Dorsolateral prefrontal cortex (tissue), 120 donors: ENCODE measurements at regions of chr20 and their contacts with region 1.

Region 1: DNA sequence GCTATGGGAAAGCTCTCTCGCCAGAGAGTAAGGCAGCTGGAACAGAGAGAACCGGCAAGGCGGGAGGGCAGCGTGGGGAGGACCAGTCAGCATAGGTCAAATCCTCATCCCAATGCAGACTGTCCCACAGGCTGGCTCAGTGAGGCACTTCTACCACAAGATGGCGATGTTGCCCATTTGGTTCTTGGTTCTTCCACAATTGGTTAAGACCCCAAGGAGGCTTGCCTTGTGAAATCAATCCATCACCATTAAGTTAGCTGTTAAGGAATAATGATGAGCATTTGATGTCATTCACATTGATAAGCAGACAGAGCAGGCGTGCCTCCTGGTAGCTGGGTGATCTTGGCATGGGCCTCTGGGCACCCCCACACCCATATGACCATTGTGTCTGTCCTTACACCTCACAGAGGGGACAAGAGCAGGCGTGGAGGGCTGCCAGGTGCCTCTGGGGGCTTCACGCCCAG is 2.4 kb downstream of the CSTL1 start:
- DNase-seq: peak in 8 of 10 donors; percentile 50 to 83 (median 74)
- H3K4me3 ChIP-seq: no peak overlapping the region
- H3K27ac ChIP-seq: no peak overlapping the region
- H3K27me3 ChIP-seq: no peaks in the 10 kb centered on the region
- CTCF ChIP-seq: peak; percentile 65 to 94 (median 89)

Region 2: GRCh38 chr20:23357767-23358591 is 83.9 kb before region 1 on chr20:
- intact Hi-C with region 1: loop called in 1 of 2 experiments (anchors 5 kb)
- DNase-seq: peak; percentile 99 to 100 (median 100)
- H3K4me3 ChIP-seq: peak overlapping the region; percentile 47 to 97 (median 77)
- H3K27ac ChIP-seq: peak overlapping the region; percentile 63 to 100 (median 95)
- H3K27me3 ChIP-seq: no peaks in the 10 kb centered on the region
- CTCF ChIP-seq: peak in 40 of 56 donors; percentile 3 to 58 (median 26)

Region 3: GRCh38 chr20:23606652-23607049 is 164.8 kb after region 1 on chr20:
- intact Hi-C with region 1: loop called (anchors 2 to 5 kb)
- DNase-seq: peak in 9 of 10 donors; percentile 49 to 83 (median 74)
- H3K4me3 ChIP-seq: no peak overlapping the region
- H3K27ac ChIP-seq: no peak overlapping the region
- H3K27me3 ChIP-seq: peaks cover 0 to 8% (median 0%) of the 10 kb centered on the region in 45 donors
- CTCF ChIP-seq: peak; percentile 40 to 89 (median 80)